H1 (cell line): ENCODE measurements at regions of chr1 and their contacts with region 1.

Region 1: DNA sequence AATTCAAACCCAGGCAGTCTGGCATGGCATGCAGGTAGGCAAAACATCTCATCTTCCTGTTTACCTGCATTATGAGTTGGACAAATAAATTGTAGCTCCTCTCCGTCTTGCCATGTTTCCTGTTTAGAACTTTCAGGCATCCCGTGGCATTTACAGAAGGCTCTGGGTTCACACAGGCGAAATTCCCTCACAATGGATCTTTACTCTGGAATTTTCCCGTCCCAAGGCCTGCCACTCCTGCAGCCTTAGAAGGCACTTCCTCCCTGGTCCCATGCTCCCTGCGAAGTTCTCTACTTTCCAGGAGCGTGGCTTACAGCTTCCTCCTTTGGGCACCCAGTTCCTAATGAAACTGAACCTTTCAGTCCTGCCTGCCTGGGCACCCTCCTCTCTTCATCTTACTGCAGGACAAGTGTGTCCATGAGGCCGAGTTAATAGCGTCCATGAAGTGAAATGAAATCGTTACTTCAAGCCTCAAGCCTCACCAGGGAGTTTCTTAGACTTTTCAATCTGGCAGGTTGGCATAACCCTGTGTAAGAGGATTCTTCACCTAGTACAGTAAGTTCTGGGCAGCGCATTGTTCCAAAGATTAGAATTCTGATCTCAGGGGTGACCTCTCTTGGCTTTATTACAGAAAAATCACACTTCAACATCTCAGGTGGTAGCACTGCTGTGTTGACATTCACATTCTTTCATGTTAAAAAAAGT is 36.8 kb upstream of the AHCYL1 start:
- DNase-seq: no peak
- H3K4me3 ChIP-seq: no peak overlapping the region
- H3K27ac ChIP-seq: no peak overlapping the region
- H3K4me1 ChIP-seq: peaks cover 0 to 5% (median 2%) of the 10 kb centered on the region in 4 experiments; a peak in 2 of 7 replicates
- H3K27me3 ChIP-seq: no peaks in the 10 kb centered on the region
- CTCF ChIP-seq: no peak
- EP300 ChIP-seq: no peak
- POLR2A ChIP-seq: no peak
- RAD21 ChIP-seq: no peak

Region 2: GRCh38 chr1:109959974-109960744 is 12.4 kb after region 1 on chr1:
- CTCF ChIA-PET with region 1: interaction called, 15 read pairs
- POLR2A ChIA-PET with region 1: interaction called, 3 read pairs
- DNase-seq: no peak
- H3K4me3 ChIP-seq: peak overlapping the region in 2 of 4 experiments; percentile 13 to 45; a peak in 4 of 8 replicates
- H3K27ac ChIP-seq: no peak overlapping the region; the same call in 1 of the 2 replicates
- H3K4me1 ChIP-seq: peaks cover 5 to 26% (median 17%) of the 10 kb centered on the region in 4 experiments; a peak in 6 of 7 replicates
- H3K27me3 ChIP-seq: peaks cover 0 to 9% (median 2%) of the 10 kb centered on the region in 4 experiments; a peak in 4 of 7 replicates
- CTCF ChIP-seq: no peak
- EP300 ChIP-seq: 0 out of 3 replicates have a peak, but pooled peaks of 1 of the 2 experiments have one; percentile 33
- POLR2A ChIP-seq: no peak
- RAD21 ChIP-seq: no peak

Region 3: GRCh38 chr1:110176299-110176956 is 228.7 kb after region 1 on chr1:
- CTCF ChIA-PET with region 1: no interaction called
- POLR2A ChIA-PET with region 1: no interaction called
- DNase-seq: no peak
- H3K4me3 ChIP-seq: no peak overlapping the region
- H3K27ac ChIP-seq: no peak overlapping the region
- H3K4me1 ChIP-seq: peaks cover 0 to 4% (median 0%) of the 10 kb centered on the region in 4 experiments; a peak in 2 of 7 replicates
- H3K27me3 ChIP-seq: no peaks in the 10 kb centered on the region; a peak in 1 of 7 replicates
- CTCF ChIP-seq: no peak
- EP300 ChIP-seq: no peak
- POLR2A ChIP-seq: no peak
- RAD21 ChIP-seq: no peak